ENCODE measurements at regions of chr16 and their contacts with region 1.

Region 1: GRCh38 chr16:27235055-27235937 is 32.0 kb downstream of the KDM8 start:
- DNase-seq: peak; percentile 67 to 81 (median 72)
- ATAC-seq: peak; percentile 65
- H3K4me3 ChIP-seq: no peak overlapping the region
- H3K27ac ChIP-seq: peak overlapping the region in 3 of 4 donors; percentile 15 to 46 (median 23)
- H3K4me1 ChIP-seq: peaks cover 32% of the 10 kb centered on the region
- H3K27me3 ChIP-seq: no peaks in the 10 kb centered on the region
- CTCF ChIP-seq: peak; percentile 55 to 81 (median 75)
- POLR2A ChIP-seq: no peak

Region 2: DNA sequence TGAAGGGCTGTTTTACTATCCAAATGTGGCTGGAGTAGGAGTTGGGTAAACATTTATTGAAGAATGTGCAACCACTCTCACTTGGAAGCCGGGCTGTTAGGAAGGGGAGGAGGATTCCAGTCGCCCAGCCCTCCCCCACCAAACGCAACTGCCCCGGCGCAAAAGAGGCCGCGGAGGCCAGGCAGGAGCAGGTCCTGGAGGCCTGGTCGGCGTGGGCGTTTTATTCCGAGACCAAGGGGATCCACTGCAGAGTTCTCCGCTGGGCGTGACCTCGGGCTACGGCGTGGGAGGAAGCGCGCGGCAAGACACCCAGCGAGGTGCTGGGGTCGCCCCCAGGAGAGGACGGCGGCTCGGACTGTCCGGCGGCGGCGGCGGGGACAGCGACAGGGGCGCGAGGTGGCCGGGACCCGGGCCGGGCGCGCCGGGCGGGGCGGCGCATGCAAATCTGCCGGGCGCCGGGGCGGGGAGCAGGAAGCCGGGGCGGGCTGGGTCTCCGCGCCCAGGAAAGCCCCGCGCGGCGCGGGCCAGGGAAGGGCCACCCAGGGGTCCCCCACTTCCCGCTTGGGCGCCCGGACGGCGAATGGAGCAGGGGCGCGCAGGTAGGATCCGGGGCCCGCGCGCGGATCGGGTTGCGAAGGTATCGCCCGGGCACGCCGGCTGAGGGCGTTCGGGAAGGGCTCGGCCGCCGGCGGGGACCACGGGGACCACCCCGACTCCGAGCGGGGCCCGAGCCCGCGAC is 78.3 kb after region 1 on chr16 and contains the start of gene IL4R:
- intact Hi-C with region 1: loop called (anchors 10 kb)
- DNase-seq: peak; percentile 72 to 85 (median 76)
- ATAC-seq: peak; percentile 76
- H3K4me3 ChIP-seq: peak within 1 kb of the TSS; percentile 80 to 84
- H3K27ac ChIP-seq: peak within 1 kb of the TSS; percentile 79 to 92 (median 90)
- H3K4me1 ChIP-seq: peaks cover 35% of the 10 kb centered on the region
- H3K27me3 ChIP-seq: no peaks in the 10 kb centered on the region
- CTCF ChIP-seq: no peak
- POLR2A ChIP-seq: peak; percentile 48 to 78 (median 77)
- total RNA-seq, gene IL4R: 29.7 to 236 TPM

Region 3: DNA sequence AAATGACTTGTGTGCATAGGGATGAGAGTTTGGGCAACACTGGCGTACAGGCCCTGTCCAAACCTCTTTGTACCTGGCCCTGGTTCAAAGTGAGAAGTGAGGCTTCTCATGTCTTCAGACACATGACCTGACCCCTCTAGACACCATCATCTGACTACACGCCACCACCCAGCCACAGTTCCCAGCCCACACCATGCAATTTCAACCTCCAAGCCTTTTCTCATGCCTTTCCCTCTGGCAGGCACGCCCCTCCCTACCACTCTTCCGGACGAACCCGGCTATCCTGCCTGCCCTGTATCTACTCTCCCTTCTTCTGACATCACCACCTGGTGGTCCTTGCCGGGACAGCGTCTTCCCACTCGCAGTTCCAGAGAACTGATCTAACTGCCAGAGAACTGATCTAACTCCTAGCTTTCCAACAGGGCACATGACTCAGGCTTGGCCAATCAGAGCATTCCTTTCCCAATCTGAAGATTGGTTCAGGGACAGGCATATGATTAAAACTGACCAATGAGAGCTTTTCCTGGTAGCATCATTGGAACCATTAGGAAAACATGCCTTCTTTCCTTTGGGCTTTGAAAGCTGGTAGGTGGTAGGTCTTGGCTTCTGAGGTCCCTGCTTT is 139.6 kb after region 1 on chr16:
- intact Hi-C with region 1: loop called (anchors 10 kb)
- DNase-seq: peak; percentile 37 to 52 (median 40)
- ATAC-seq: peak; percentile 76
- H3K4me3 ChIP-seq: no peak overlapping the region
- H3K27ac ChIP-seq: no peak overlapping the region
- H3K4me1 ChIP-seq: no peaks in the 10 kb centered on the region
- H3K27me3 ChIP-seq: no peaks in the 10 kb centered on the region
- CTCF ChIP-seq: peak in 5 of 7 experiments; percentile 18 to 40 (median 32)
- POLR2A ChIP-seq: peak in 1 of 3 donors; percentile 18